AG04449 (cell line): ENCODE measurements at regions of chr15 and their contacts with region 1.

Region 1: GRCh38 chr15:81274931-81275707 is 48.8 kb downstream of the STARD5 start:
- DNase-seq: no peak
- H3K4me3 ChIP-seq: no peak overlapping the region
- CTCF ChIP-seq: peak; percentile 93

Region 2: GRCh38 chr15:81296673-81297072 is 21.6 kb after region 1 on chr15:
- CTCF ChIA-PET with region 1: interaction called, 22 read pairs
- POLR2A ChIA-PET with region 1: no interaction called
- DNase-seq: no peak
- H3K4me3 ChIP-seq: no peak overlapping the region
- CTCF ChIP-seq: no peak

Region 3: GRCh38 chr15:81330366-81331090 is 55.4 kb after region 1 on chr15:
- CTCF ChIA-PET with region 1: interaction called, 51 read pairs
- POLR2A ChIA-PET with region 1: interaction called, 5 read pairs
- DNase-seq: no peak
- H3K4me3 ChIP-seq: no peak overlapping the region
- CTCF ChIP-seq: no peak

Region 4: DNA sequence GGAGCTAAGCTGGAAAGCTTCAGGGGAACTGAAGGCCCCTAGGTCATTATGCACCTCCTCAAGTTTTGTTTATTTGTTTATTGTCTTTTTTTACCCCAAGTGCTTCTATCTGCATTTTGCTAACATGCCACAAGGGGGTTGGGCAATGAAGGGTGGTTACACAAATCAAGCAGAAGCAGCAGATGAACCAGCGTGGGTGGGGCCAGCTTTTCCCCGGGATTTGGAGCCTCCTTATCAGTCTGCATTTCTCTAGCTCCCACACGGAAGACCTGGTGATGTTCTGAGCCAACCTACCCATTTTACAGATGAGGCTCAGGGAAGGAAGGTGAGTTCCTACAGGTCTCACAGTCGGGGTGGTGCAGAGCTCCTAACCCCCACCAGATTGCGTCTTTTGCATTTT is 82.1 kb after region 1 on chr15:
- CTCF ChIA-PET with region 1: interaction called, 21 read pairs
- POLR2A ChIA-PET with region 1: no interaction called
- DNase-seq: no peak
- H3K4me3 ChIP-seq: no peak overlapping the region
- CTCF ChIP-seq: no peak

Region 5: DNA sequence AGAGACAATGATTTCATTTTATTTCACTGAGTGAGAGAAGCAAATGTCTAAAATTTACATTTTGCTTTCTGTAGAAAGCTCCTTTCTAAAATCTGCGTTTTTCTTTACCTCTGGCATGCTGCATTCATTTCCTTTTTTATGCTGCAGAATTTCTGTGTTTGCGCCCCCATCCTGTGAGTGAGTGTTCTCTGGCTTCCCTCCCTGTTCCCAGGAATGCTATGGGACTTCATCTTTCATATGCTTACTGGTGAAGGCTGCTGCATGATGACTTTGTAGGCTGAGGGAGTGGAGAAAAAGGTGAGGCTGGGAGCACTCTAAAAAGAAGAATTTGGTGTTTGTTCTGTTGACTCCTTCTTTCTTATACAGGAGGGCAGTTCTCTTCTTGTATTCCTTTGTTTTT is 106.6 kb after region 1 on chr15:
- CTCF ChIA-PET with region 1: interaction called, 22 read pairs
- POLR2A ChIA-PET with region 1: no interaction called
- DNase-seq: no peak
- H3K4me3 ChIP-seq: no peak overlapping the region
- CTCF ChIP-seq: no peak

Region 6: GRCh38 chr15:81410318-81410753 is 135.2 kb after region 1 on chr15:
- CTCF ChIA-PET with region 1: interaction called, 70 read pairs
- POLR2A ChIA-PET with region 1: no interaction called
- DNase-seq: peak; percentile 12
- H3K4me3 ChIP-seq: no peak overlapping the region
- CTCF ChIP-seq: peak; percentile 46

Region 7: GRCh38 chr15:81516461-81516860 is 241.3 kb after region 1 on chr15:
- CTCF ChIA-PET with region 1: no interaction called
- POLR2A ChIA-PET with region 1: no interaction called
- DNase-seq: no peak
- H3K4me3 ChIP-seq: no peak overlapping the region
- CTCF ChIP-seq: no peak